Endothelial cell of umbilical vein (primary cell): ENCODE measurements at regions of chr12 and their contacts with region 1.

Region 1: GRCh38 chr12:44015335-44015941 is 179.6 kb downstream of the TMEM117 start:
- DNase-seq: peak; percentile 56
- H3K4me3 ChIP-seq: no peak overlapping the region
- H3K27ac ChIP-seq: no peak overlapping the region
- H3K4me1 ChIP-seq: no peaks in the 10 kb centered on the region
- H3K27me3 ChIP-seq: no peaks in the 10 kb centered on the region
- CTCF ChIP-seq: peak; percentile 22 to 34
- POLR2A ChIP-seq: no peak

Region 2: DNA sequence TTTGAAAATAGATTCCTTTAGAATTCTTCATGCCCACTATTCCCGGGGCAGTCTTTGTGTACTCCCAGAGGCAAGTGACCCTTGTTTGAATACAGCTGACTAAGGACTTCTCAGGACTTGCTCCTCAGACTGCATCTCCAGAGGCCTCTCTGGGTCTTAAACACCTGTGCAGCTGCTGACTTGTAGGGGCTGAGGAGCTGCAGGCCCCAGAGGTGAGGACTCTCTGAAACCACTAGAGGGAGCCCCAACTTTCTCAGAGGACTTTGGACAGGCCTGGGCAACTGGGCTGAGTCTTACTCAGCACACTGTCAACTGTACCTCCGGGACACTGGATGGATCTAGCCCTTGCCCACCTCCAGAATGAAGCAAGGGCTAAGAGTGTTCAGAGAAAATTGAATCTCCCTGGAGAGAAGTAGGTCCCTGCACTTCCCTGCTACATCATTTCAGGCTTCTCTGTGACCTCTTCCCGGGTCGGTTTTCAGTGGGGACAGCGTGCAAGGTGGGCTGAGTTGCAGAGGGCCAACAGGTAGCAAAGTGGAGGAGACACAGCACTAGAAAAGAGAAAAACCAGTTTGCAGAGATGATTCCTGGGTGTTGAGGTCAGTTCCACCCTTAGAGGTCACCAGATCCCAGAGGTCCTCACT is 15.0 kb before region 1 on chr12:
- CTCF ChIA-PET with region 1: interaction called, 30 read pairs
- POLR2A ChIA-PET with region 1: no interaction called
- dilution Hi-C with region 1: no loop called
- intact Hi-C with region 1: no loop called
- DNase-seq: peak; percentile 43
- H3K4me3 ChIP-seq: no peak overlapping the region
- H3K27ac ChIP-seq: no peak overlapping the region
- H3K4me1 ChIP-seq: no peaks in the 10 kb centered on the region
- H3K27me3 ChIP-seq: no peaks in the 10 kb centered on the region
- CTCF ChIP-seq: peak; percentile 70 to 81
- POLR2A ChIP-seq: no peak

Region 3: GRCh38 chr12:44031472-44032185 is 16.2 kb after region 1 on chr12:
- CTCF ChIA-PET with region 1: interaction called, 12 read pairs
- POLR2A ChIA-PET with region 1: no interaction called
- dilution Hi-C with region 1: no loop called
- intact Hi-C with region 1: no loop called
- DNase-seq: no peak
- H3K4me3 ChIP-seq: no peak overlapping the region
- H3K27ac ChIP-seq: no peak overlapping the region
- H3K4me1 ChIP-seq: no peaks in the 10 kb centered on the region
- H3K27me3 ChIP-seq: no peaks in the 10 kb centered on the region
- CTCF ChIP-seq: no peak
- POLR2A ChIP-seq: no peak

Region 4: DNA sequence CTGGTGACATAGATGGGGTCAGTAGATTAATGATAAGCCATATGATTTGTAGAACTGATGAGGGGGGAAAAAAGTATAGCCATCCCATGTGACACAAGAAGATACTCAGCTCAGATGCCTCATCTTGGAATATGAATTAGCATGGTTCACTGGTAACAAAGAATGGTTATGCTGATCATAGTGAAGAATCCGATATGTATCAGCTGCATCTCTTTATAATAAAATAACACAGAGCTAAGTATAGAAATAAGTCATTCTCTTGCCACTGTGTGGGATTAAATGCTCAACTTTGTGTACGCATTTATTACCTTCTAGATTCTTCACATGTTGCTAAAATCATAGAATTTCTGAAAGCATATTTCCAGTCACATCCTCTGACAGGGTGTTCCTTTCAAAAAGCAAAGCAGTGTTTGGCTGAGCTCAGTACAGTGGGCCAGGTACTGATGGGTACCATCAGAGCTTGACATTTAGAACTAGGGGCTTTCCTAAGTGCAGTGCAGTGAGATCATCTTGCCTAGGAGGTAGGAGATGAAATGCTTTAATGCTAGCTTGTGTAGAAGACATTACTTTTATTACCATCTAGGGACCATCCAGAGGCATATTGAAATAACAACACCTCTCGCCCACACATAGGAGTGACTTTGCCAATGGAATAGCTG is 76.6 kb after region 1 on chr12:
- CTCF ChIA-PET with region 1: no interaction called
- POLR2A ChIA-PET with region 1: no interaction called
- dilution Hi-C with region 1: no loop called
- intact Hi-C with region 1: no loop called
- DNase-seq: no peak
- H3K4me3 ChIP-seq: no peak overlapping the region
- H3K27ac ChIP-seq: no peak overlapping the region
- H3K4me1 ChIP-seq: no peaks in the 10 kb centered on the region
- H3K27me3 ChIP-seq: no peaks in the 10 kb centered on the region
- CTCF ChIP-seq: no peak
- POLR2A ChIP-seq: no peak

Region 5: GRCh38 chr12:44227616-44228015 is 212.2 kb after region 1 on chr12:
- CTCF ChIA-PET with region 1: no interaction called
- POLR2A ChIA-PET with region 1: no interaction called
- dilution Hi-C with region 1: no loop called
- intact Hi-C with region 1: no loop called
- DNase-seq: no peak
- H3K4me3 ChIP-seq: no peak overlapping the region
- H3K27ac ChIP-seq: no peak overlapping the region
- H3K4me1 ChIP-seq: no peaks in the 10 kb centered on the region
- H3K27me3 ChIP-seq: no peaks in the 10 kb centered on the region
- CTCF ChIP-seq: no peak
- POLR2A ChIP-seq: no peak

Region 6: DNA sequence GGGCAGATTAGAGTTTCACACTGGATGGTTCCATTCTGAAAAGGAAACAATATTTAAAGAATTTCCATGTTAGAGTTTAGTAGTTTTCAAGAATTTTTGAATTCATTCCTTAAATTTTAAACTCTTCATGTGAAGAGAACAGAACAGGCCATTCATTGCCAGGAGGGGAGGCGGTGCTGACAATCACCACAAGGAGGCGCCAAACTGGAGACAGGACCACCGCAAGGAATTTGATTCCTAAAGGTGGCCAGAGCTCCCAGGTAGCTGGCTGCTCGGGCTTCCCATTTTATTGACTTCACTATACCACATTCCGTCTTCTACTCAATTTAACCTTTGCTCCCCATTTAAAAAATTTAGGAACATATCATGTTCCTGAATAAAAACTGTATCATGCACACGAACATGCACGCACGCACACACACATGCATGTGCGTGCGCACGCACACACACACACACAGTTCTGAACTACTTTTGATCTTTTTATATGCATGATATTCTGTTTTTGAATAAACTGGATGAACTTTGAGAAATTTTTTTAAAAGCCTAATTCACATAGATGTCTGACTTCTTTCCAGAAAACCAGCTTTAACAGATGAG is 759.5 kb after region 1 on chr12:
- CTCF ChIA-PET with region 1: interaction called, 3 read pairs
- POLR2A ChIA-PET with region 1: no interaction called
- dilution Hi-C with region 1: no loop called
- intact Hi-C with region 1: loop called (anchors 1 kb)
- DNase-seq: peak; percentile 41
- H3K4me3 ChIP-seq: no peak overlapping the region
- H3K27ac ChIP-seq: no peak overlapping the region
- H3K4me1 ChIP-seq: no peaks in the 10 kb centered on the region
- H3K27me3 ChIP-seq: no peaks in the 10 kb centered on the region
- CTCF ChIP-seq: peak; percentile 78 to 86
- POLR2A ChIP-seq: no peak

Region 7: DNA sequence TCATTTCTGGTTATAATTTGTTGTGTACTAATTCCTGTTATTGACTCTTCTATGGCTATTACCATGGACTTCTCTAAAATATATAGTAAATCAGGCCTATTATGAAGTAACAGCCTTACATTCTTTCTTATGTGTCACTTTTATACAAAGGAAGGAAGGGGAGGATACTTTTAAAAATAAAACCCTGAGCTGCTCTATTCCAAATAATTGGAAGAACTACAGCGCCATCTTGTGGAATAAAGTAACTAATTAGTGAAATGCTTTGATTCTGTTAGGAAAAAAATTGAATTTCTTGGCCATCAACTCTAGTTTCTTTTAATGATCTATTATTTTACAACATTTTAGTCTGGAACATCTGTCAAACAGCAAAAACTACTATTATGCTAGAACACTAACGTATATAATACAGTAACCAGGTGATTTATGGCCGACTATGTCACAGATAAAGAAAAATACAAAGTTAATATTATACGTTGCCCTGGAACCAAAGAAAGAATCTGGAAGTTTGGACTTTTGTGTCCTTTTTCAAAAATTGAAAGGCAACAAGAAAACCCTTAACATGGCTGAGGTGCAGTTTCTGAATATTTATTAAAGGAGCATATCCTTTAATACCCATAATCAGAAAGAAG is 915.6 kb after region 1 on chr12:
- CTCF ChIA-PET with region 1: interaction called, 98 read pairs
- POLR2A ChIA-PET with region 1: no interaction called
- dilution Hi-C with region 1: no loop called
- intact Hi-C with region 1: loop called (anchors 1 kb)
- DNase-seq: peak; percentile 74
- H3K4me3 ChIP-seq: no peak overlapping the region
- H3K27ac ChIP-seq: no peak overlapping the region
- H3K4me1 ChIP-seq: peaks cover 3% of the 10 kb centered on the region
- H3K27me3 ChIP-seq: no peaks in the 10 kb centered on the region
- CTCF ChIP-seq: peak; percentile 6 to 30
- POLR2A ChIP-seq: no peak